Mammary epithelial cell (primary cell): ENCODE measurements at regions of chr1 and their contacts with region 1.

Region 1: DNA sequence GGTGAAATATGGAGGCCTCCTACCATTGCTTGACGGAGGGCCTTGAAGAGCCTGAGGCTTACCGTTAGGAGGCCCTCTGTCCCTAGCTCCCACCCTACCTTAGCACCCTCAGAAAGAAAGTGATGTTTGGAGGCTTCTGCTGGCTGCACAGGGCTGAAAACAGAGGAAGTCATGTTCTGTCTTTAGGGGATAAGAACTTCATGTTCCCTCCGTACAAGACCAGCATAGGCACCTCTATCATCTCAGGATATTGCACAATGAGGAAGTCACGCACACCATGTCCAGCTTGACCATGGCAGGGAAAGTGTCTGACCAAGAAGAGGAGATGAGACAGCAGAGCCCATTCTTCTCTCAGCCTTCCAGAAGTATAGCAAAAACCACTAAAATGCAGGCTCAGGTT is 13.8 kb downstream of the ADORA3 start:
- DNase-seq: no peak
- H3K4me3 ChIP-seq: no peak overlapping the region
- H3K27ac ChIP-seq: no peak overlapping the region
- H3K4me1 ChIP-seq: no peaks in the 10 kb centered on the region
- H3K27me3 ChIP-seq: no peaks in the 10 kb centered on the region
- CTCF ChIP-seq: no peak

Region 2: GRCh38 chr1:111538343-111539025 is 48.9 kb after region 1 on chr1:
- CTCF ChIA-PET with region 1: no interaction called
- dilution Hi-C with region 1: no loop called
- in situ Hi-C with region 1: no loop called
- intact Hi-C with region 1: no loop called
- DNase-seq: peak; percentile 12
- H3K4me3 ChIP-seq: no peak overlapping the region
- H3K27ac ChIP-seq: no peak overlapping the region
- H3K4me1 ChIP-seq: peaks cover 14% of the 10 kb centered on the region
- H3K27me3 ChIP-seq: no peaks in the 10 kb centered on the region
- CTCF ChIP-seq: no peak

Region 3: GRCh38 chr1:111769517-111770146 is 280.0 kb after region 1 on chr1:
- CTCF ChIA-PET with region 1: no interaction called
- dilution Hi-C with region 1: no loop called
- in situ Hi-C with region 1: loop called in 1 of 2 experiments (anchors 10 kb)
- intact Hi-C with region 1: no loop called
- DNase-seq: peak; percentile 42
- H3K4me3 ChIP-seq: no peak overlapping the region
- H3K27ac ChIP-seq: no peak overlapping the region
- H3K4me1 ChIP-seq: no peaks in the 10 kb centered on the region
- H3K27me3 ChIP-seq: no peaks in the 10 kb centered on the region
- CTCF ChIP-seq: peak; percentile 74 to 84